SK-N-SH (cell line): ENCODE measurements at regions of chr7 and their contacts with region 1.

Region 1: DNA sequence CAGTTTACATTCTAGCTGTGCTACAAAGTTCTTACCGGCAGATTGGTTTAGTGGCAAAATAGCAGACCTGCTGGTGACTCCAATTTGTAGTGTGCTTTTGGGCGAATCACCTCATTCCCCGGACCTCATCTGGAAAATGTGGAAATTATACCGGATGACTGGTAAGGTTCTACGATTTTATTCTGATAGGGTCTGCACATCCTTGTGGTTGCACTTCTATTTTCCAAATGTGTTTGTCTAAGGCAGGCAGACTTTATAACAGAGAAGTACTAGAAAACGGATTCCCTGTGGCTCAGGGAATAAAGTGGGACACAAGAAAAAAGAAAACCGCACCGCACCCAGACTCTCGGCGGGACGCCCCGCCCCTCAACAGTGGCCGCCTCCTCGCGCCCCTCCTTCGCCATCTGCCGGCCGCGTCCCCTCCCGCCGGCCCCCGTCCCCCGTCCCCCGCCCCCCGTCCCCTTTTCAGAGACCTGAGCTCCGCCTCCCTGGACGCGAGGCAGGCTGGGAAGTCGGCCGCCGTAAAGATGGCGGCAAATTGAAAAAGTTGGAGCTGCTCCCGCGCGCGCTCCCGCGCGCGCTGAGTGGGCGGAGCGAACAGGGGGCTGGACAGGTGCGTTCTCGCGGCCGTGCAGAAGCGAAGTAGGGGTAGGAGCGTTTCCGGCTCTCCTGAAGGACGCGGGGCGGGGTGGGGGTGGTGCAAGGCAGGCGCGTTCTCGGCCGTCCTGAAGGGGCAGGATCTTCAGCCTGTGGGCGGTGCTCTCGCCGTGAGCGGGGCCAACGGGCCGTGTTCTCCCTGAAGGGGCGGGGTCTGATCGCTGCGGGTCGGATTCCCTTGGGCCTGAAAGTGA is 531 bp upstream of the CCM2 start:
- DNase-seq: peak; percentile 99
- H3K4me3 ChIP-seq: peak overlapping the region; percentile 48 to 77
- H3K27ac ChIP-seq: peak overlapping the region; percentile 80 to 86
- H3K4me1 ChIP-seq: peaks cover 0 to 10% of the 10 kb centered on the region in 2 experiments; a peak in 3 of 4 replicates
- H3K27me3 ChIP-seq: no peaks in the 10 kb centered on the region
- CTCF ChIP-seq: no peak
- EP300 ChIP-seq: 0 out of 4 replicates have a peak, but pooled peaks of 1 of the 2 experiments have one; percentile 11
- RAD21 ChIP-seq: no peak

Region 2: DNA sequence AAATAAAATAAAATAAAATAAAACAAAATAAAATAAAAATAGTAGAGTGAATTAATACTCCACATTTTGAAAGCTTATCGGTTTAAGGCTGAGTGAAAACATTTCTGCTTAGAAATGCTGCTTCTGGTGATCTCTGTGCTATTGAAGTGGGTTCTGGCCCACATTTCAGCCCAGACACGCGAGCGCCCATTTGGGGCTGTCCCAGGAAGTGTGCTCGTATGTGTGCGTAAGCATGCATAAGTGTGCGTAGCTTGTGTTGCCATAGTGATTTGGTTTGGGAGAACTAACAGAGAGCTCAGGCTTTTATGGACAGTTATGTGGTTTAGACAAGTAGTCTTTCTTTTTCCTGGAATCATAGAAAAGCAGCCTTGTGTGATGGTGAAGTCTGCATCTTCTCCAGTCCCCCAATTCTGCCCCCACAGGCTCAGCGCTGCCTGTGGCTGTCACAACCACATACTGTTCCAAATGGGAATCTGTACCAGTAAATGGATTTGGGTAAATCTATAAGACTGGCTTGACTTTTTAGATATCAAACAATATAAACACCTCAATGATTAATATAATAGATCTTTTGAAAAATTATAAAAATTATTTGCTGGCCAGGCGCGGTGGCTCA is 84.4 kb before region 1 on chr7:
- CTCF ChIA-PET with region 1: no interaction called
- POLR2A ChIA-PET with region 1: no interaction called
- DNase-seq: no peak
- H3K4me3 ChIP-seq: no peak overlapping the region
- H3K27ac ChIP-seq: no peak overlapping the region
- H3K4me1 ChIP-seq: peaks cover 0 to 16% of the 10 kb centered on the region in 2 experiments; a peak in 1 of 4 replicates
- H3K27me3 ChIP-seq: no peaks in the 10 kb centered on the region
- CTCF ChIP-seq: no peak
- EP300 ChIP-seq: no peak
- RAD21 ChIP-seq: no peak

Region 3: GRCh38 chr7:45013465-45013967 is 14.0 kb after region 1 on chr7:
- CTCF ChIA-PET with region 1: interaction called, 10 read pairs
- POLR2A ChIA-PET with region 1: interaction called, 4 read pairs
- DNase-seq: no peak
- H3K4me3 ChIP-seq: no peak overlapping the region
- H3K27ac ChIP-seq: no peak overlapping the region
- H3K4me1 ChIP-seq: no peaks in the 10 kb centered on the region
- H3K27me3 ChIP-seq: no peaks in the 10 kb centered on the region
- CTCF ChIP-seq: no peak
- EP300 ChIP-seq: no peak
- RAD21 ChIP-seq: no peak